Activated CD4-positive, alpha-beta T cell treated with anti-CD3 and anti-CD28 coated beads, Interleukin-2, amount 10 ng/mL, durations not matched to agents 24 days and 14 days (primary cell): ENCODE measurements at regions of chr19 and their contacts with region 1.

Region 1: DNA sequence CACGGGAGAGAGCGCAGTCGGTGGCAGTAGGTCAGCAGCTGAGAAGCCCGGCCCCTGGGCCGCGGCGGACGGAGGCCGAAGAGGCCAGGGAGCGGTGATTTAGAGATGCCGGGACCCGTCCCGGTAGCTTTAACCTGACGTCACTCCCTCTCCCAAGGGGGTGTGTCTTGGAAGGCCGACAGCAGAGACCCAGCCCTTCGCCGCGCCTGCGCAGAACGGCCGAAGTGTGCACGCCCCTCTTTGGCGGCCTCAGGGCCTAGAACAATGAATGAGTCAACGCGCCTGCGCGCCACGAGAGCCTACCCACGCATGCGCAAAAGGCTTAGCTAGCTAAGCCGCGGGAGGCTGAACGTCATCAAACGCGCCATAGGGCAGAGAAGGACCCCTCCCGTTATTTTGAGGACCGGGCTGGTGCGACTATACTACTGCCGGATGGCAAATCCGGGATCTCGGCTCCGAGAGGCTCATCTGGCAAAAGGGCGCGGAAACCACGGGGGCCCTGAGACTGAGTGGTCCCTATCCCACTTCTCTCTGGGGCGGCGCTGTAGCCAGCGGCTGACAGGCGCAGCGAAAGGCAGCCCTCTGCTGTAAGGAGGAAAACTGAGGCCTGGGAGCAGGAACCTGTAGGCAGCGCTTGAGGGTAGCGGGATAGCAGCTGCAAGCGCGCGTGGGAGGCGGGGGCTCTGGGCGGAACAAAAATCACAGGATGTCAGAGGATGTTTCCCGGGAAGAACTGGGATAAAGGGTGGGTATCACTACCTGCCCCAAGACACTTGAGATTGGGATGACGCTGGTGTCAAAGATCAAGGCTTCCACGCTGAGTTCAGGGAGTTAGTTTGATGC is at the starts of genes IRGQ and ZNF576:
- DNase-seq: peak; percentile 100
- H3K4me3 Mint-ChIP-seq: peak within 1 kb of the TSS; percentile 96
- H3K27ac Mint-ChIP-seq: peak within 1 kb of the TSS; percentile 96
- H3K4me1 Mint-ChIP-seq: peaks cover 33% of the 10 kb centered on the region
- H3K27me3 Mint-ChIP-seq: no peaks in the 10 kb centered on the region
- total RNA-seq, gene IRGQ: 31.5 and 32.7 TPM in 2 replicates
- total RNA-seq, gene ZNF576: 14.4 and 15.3 TPM in 2 replicates

Region 2: DNA sequence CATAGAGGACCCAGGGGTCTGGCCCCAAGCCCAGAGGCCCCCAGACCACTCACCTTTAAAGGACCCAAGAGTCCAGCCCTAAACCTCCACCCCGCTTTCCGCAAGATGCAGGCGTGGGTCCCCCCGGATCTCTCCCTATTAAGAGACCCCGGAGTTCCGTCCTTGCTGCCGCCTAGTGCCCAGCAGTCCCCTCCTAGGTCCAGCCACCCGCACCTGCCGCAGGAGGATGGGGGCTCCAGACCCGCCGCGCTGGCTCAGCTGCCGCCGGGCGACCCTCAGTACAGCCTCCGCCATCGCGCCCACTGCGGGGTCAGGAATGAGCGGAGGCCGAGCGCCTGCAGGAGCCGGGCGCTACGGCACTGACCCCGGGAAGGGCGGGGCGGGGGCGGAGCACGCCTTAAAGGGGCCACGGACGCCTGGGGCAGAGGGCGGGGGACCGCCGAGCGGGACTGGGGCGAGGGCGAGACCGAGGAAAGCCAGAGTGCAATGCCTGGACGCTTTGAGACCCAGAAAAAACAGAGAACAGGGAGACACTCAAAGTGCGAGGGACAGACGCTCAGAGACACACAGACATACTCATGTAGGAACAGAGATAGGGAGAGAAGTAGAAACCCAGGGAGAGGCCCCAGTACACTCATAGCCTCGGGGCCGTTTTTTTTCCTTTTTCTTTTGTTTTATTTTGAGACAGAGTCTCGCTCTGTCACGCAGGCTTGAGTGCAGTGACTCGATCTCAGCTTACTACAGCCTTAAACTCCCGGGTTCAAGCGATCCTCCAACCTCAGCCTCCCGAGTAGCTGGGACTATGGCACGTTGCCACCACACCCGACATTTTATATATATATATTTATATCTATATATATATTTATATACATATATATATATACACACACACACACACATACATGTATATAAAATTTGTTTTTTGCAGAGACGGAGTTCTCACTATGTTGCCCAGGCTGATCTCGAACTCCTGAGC is 69.0 kb before region 1 on chr19 and contains the start of gene ETHE1:
- intact Hi-C with region 1: loop called (anchors 1 kb)
- DNase-seq: peak; percentile 96
- H3K4me3 Mint-ChIP-seq: peak within 1 kb of the TSS; percentile 84
- H3K27ac Mint-ChIP-seq: peak within 1 kb of the TSS; percentile 97
- H3K4me1 Mint-ChIP-seq: peaks cover 26% of the 10 kb centered on the region
- H3K27me3 Mint-ChIP-seq: no peaks in the 10 kb centered on the region
- total RNA-seq, gene ETHE1: 59.3 and 59.7 TPM in 2 replicates

Region 3: DNA sequence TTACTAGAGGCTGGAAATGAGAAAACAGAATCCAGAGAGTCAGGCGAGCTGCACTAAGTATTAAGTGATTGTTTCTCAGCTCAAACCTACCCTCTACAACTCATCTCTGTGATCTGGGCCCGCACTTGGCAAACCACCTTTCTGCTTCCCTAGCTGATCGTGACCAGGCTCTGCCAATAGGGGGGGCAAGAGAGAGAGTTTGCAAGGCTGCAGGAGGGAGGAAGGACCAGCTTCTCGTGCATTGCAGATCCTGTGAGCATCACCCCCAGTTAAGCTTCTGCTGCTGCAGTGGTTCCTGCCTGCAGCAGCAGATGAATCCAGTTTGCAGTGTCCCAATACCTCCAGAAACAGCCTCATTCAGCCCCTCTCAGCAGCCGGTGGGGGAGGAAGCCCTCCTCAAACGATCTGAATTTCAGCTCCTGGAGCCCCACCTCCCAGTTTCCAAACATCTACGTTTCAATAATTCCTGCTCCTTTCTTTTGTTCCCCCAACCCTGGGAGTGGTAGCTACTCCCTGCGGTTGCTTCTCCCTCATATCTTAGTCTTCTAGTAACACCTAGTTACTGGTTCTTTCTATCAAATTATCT is 40.9 kb before region 1 on chr19:
- intact Hi-C with region 1: loop called (anchors 1 kb)
- DNase-seq: peak; percentile 96
- H3K4me3 Mint-ChIP-seq: no peak overlapping the region
- H3K27ac Mint-ChIP-seq: peak overlapping the region; percentile 3
- H3K4me1 Mint-ChIP-seq: peaks cover 8% of the 10 kb centered on the region
- H3K27me3 Mint-ChIP-seq: no peaks in the 10 kb centered on the region

Region 4: GRCh38 chr19:43619262-43620060 is 23.2 kb after region 1 on chr19 and contains the start of gene ZNF428:
- intact Hi-C with region 1: loop called (anchors 1 kb)
- DNase-seq: peak; percentile 96
- H3K4me3 Mint-ChIP-seq: peak within 1 kb of the TSS; percentile 98
- H3K27ac Mint-ChIP-seq: peak within 1 kb of the TSS; percentile 99
- H3K4me1 Mint-ChIP-seq: peaks cover 23% of the 10 kb centered on the region
- H3K27me3 Mint-ChIP-seq: no peaks in the 10 kb centered on the region
- total RNA-seq, gene ZNF428: 18.1 and 19.4 TPM in 2 replicates

Region 5: DNA sequence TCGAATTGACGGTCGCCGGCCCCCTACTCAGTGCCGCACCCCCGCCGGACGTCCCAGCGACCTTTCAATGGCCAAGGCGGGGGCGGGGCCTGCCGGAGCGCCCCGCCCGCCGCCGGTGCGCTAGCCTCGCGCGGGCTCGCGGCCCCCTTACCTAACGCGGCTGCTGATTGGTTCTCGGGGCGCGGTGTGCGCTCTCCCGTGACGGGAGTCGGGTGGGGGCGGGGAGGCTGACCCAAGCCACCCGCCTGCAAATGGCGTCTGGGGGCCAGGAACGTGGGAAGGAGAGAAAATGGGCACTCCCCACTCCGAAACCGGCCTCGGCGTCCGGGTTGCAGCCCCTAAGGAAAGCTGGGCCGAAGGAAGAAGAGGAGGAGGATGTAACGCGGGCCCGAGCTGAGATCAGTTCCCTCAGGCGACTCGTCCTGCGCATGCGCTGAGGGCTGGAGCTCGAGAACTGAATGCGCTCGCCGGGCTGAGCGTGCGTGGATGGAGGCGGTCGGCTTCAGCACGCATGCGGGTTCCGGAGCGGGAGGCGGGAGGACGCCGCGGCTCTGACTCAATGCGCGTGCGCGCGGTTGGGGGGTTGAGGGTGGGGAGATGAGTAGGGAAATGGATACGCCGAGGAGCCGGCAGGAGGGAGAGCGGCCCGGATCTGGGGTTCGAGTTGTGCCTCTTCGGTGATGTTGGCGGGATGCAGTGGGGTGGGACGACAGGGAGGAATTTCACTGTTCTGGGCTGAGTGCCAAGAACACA is 158.5 kb after region 1 on chr19 and contains the start of gene SMG9:
- intact Hi-C with region 1: loop called (anchors 2 kb)
- DNase-seq: peak; percentile 100
- H3K4me3 Mint-ChIP-seq: peak within 1 kb of the TSS; percentile 94
- H3K27ac Mint-ChIP-seq: peak within 1 kb of the TSS; percentile 100
- H3K4me1 Mint-ChIP-seq: peaks cover 68% of the 10 kb centered on the region
- H3K27me3 Mint-ChIP-seq: no peaks in the 10 kb centered on the region
- total RNA-seq, gene SMG9: 83.9 and 86.6 TPM in 2 replicates